ENCODE measurements at regions of chr17 and their contacts with region 1.

Region 1: GRCh38 chr17:50949989-50950881 is 84.1 kb upstream of the TOB1 start:
- DNase-seq: peak; percentile 82
- ATAC-seq: peak; percentile 79 to 81

Region 2: GRCh38 chr17:50783193-50783660 is 167.0 kb before region 1 on chr17:
- intact Hi-C with region 1: loop called (anchors 10 kb)
- DNase-seq: peak; percentile 81
- ATAC-seq: peak; percentile 91

Region 3: GRCh38 chr17:50841949-50842354 is 108.3 kb before region 1 on chr17:
- intact Hi-C with region 1: loop called in 1 of 2 experiments (anchors 5 kb)
- DNase-seq: peak; percentile 68
- ATAC-seq: peak; percentile 65 to 77

Region 4: DNA sequence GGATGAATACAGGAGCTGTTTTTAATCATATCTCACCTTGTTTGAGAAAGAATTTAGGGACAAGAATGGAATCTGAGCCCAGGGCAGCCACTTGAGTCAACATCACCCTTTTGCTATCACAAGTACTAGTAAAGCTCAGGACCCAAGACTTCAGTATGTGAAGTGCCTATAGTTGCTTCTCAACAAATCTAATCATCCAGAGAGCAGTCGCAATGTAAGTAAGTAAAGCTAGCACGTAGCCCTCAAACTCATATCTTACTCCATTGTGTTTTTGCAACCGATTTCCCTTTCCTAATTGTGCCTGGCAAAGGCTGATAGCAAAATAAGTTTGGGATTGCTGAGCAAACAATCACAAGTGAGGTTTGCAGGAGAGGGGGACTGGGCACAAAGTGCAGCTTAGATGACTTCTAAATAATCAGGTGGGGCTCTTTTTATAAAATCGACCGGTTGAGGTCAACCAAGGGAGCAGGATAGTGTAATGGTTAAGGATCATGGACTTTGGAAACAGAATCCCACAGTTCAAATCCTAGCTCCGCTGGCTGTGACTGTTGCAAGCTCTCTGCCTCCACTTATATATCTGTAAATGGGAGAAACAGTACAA is 97.1 kb before region 1 on chr17:
- intact Hi-C with region 1: loop called (anchors 2 to 5 kb)
- DNase-seq: no peak
- ATAC-seq: no peak

Region 5: GRCh38 chr17:50865984-50866774 is 84.1 kb before region 1 on chr17 and contains the start of gene TOB1:
- intact Hi-C with region 1: loop called in 1 of 2 experiments (anchors 5 kb)
- DNase-seq: peak; percentile 98
- ATAC-seq: peak; percentile 88 to 93
- total RNA-seq, gene TOB1: 57.9 to 63.2 TPM

Region 6: GRCh38 chr17:51006601-51007000 is 56.4 kb after region 1 on chr17:
- intact Hi-C with region 1: no loop called
- DNase-seq: no peak
- ATAC-seq: no peak

Measured in left cardiac atrium (tissue), 4 donors.